Activated CD4-positive, alpha-beta T cell treated with anti-CD3 and anti-CD28 coated beads for 36 hours (primary cell): ENCODE measurements at regions of chr7 and their contacts with region 1.

Region 1: DNA sequence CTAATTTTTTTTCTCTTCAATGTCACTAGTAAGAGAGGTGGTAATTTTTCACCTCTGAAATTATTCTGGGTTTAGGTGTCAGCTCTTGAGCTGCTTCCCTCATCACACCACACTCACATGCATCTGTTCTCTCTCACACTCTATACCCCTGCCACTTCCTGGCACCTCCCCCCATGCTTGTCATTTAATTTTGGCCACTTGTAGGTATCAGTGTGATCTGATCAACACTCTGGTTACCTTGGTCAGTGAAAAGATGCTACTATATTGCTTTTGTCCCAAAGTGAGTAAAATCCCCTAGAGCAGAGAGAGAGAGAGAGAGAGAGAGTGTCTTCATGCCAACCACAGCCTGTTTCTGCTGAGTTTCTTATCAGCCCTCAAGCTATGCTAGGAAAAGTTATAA is 42.5 kb downstream of the STK17A start:
- DNase-seq: peak; percentile 60
- ATAC-seq: peak; percentile 62
- H3K4me3 Mint-ChIP-seq: peak overlapping the region; percentile 7
- H3K27ac Mint-ChIP-seq: peak overlapping the region; percentile 63
- H3K4me1 Mint-ChIP-seq: peaks cover 91% of the 10 kb centered on the region
- H3K27me3 Mint-ChIP-seq: no peaks in the 10 kb centered on the region

Region 2: DNA sequence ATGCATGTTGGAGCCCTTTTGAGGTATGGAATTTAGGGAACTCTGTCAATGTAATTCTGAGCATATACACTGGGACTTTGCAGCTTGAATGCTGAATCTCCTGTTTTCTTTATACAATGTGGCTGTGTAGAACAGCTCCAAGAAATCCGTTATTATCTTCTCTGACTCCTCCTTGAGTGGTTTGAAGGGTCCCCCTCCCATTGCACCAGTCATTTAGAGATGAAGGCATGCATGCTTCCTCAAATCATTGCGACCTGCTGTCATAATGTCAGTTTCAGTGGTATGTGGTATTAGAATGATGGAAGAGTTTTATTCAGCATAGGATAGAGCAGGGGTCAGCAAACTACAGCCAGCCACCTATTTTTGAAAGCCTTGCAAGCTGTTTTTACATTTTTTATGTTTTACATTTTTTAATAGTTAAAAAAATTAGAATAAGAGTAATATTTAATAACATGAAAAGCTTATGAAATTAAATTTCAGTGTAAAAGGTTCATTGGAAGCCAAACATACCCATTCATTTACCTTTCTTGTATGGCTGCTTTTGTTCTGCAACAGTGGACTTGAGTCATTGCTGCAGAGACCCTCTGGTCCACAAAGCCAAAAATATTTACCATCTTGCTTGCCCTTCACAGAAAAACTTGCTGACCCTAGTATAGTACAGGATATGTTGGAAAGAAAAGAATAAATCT is 34.4 kb before region 1 on chr7:
- CTCF ChIA-PET with region 1: no interaction called
- POLR2A ChIA-PET with region 1: interaction called, 6 read pairs
- intact Hi-C with region 1: loop called in 1 of 2 experiments (anchors 1 kb)
- DNase-seq: peak; percentile 70
- ATAC-seq: peak; percentile 63
- H3K4me3 Mint-ChIP-seq: peak overlapping the region; percentile 15
- H3K27ac Mint-ChIP-seq: peak overlapping the region; percentile 82
- H3K4me1 Mint-ChIP-seq: peaks cover 83% of the 10 kb centered on the region
- H3K27me3 Mint-ChIP-seq: no peaks in the 10 kb centered on the region

Region 3: DNA sequence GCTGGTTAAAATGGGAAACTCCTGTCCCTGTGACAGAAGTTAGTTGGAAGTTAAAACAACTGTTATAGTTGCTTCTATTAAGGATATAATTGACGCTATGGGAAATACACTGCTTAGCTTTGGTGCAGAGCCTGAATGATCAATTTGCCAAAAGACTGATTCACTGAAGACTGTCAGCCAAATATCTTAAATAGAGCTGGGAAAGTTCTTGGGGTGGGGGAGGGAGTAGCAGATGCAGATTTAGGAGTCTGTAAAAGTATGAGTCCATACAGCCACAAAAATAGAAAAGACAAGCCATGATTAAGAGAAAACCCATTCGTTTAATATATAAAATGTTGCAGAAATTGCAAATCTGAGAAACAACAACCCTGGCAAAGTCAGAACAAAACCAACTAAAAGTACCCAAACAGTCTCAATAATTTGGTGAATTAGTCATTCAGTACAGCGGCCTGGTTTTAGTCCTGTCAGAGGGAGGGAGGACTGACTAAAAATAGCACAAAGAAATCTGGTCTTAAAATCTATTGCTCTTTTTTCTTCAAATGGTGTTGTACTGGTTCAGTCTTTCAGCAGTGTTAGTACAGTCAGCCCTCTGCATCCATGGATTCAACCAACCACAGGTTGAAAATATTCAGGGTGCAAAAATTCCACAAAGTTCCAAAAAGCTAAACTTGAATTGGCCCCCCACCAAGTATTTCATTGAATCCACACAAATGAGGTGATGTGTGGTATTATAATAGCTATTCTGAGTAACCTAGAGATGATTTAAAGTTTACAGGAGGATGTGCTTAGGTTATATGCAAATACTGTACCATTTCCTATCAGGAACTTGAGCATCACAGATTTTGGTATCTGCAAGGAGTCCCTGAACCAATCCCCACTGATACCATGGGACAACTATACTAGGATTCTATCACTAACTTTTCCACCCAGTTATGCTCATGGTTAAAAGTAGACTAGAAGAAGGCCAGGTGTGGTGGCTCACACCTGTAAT is 12.6 kb before region 1 on chr7:
- CTCF ChIA-PET with region 1: interaction called, 4 read pairs
- POLR2A ChIA-PET with region 1: no interaction called
- intact Hi-C with region 1: loop called (anchors 1 kb)
- DNase-seq: peak; percentile 33
- ATAC-seq: peak; percentile 86
- H3K4me3 Mint-ChIP-seq: peak overlapping the region; percentile 10
- H3K27ac Mint-ChIP-seq: peak overlapping the region; percentile 87
- H3K4me1 Mint-ChIP-seq: peaks cover 73% of the 10 kb centered on the region
- H3K27me3 Mint-ChIP-seq: no peaks in the 10 kb centered on the region

Region 4: DNA sequence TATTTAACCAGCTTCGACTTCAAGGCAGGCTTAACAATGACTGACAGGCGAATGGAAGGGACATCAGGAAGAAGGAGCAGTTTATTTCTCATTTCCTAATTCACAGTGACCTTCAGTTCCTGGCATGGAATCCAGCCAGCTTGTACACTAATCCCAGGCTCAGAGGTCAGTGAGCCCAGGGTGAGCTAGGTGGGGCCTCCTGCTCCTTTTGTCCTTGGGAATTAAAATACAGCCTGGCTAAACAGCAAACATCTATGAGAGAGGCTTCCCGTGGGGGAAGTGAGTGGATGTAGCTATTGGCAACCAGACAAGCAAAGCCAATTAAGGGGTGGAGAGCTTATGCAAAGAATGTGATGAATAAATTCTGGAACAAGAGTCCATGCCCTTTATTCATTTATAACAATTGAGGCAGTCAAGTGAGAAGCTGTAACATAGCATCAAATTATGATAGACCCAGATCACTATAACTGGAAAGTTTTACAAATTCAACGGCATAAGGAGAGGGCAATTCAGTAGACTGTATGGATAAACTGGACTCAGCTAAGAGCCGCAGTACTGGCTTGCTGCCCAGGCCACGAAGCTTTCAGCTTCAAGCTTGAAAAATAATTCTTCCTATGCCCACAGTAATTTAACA is 14.5 kb after region 1 on chr7:
- CTCF ChIA-PET with region 1: interaction called, 9 read pairs
- POLR2A ChIA-PET with region 1: interaction called, 4 read pairs
- intact Hi-C with region 1: loop called in 1 of 2 experiments (anchors 2 kb)
- DNase-seq: no peak
- ATAC-seq: no peak
- H3K4me3 Mint-ChIP-seq: no peak overlapping the region
- H3K27ac Mint-ChIP-seq: peak overlapping the region; percentile 76
- H3K4me1 Mint-ChIP-seq: peaks cover 90% of the 10 kb centered on the region
- H3K27me3 Mint-ChIP-seq: no peaks in the 10 kb centered on the region

Region 5: DNA sequence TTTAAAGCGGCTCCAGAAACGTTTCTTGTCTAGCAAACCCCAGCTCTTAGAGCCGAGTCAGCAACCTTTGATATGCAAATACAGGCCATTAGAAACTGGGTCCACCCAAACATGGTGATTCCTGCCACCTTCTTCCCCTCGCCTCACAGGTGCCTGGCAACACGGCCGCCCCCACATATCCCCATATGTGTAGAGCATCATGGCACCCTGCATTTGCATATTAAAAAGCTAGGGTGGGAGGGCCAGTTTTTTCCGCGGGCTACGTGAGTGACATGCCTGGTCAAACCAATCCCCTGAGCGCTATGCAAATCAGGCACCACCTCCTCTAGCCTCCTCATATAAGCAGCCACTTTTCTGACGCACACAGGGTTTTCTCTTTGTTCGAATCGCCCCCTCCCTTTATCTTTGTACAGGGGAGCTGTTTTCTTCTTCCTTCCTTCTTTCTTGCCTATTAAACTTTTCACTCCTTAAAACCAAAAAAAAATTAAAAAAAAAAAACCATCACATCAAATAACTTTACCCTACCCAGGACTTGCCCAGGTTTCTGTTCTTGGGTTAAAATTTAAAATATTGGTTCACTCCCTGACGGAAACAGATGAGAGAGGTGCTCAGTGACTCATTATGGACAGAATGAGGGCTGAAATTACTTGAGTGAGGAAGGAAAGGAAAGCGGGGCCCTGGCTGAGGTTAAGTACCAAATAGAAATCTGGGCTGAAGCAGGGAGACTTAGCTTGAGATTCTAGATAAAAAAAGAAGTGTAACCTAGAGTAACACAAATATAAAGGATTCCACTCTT is 44.0 kb after region 1 on chr7:
- CTCF ChIA-PET with region 1: no interaction called
- POLR2A ChIA-PET with region 1: interaction called, 14 read pairs
- intact Hi-C with region 1: no loop called
- DNase-seq: peak; percentile 93
- ATAC-seq: peak; percentile 85
- H3K4me3 Mint-ChIP-seq: peak overlapping the region; percentile 68
- H3K27ac Mint-ChIP-seq: peak overlapping the region; percentile 94
- H3K4me1 Mint-ChIP-seq: peaks cover 84% of the 10 kb centered on the region
- H3K27me3 Mint-ChIP-seq: no peaks in the 10 kb centered on the region

Region 6: DNA sequence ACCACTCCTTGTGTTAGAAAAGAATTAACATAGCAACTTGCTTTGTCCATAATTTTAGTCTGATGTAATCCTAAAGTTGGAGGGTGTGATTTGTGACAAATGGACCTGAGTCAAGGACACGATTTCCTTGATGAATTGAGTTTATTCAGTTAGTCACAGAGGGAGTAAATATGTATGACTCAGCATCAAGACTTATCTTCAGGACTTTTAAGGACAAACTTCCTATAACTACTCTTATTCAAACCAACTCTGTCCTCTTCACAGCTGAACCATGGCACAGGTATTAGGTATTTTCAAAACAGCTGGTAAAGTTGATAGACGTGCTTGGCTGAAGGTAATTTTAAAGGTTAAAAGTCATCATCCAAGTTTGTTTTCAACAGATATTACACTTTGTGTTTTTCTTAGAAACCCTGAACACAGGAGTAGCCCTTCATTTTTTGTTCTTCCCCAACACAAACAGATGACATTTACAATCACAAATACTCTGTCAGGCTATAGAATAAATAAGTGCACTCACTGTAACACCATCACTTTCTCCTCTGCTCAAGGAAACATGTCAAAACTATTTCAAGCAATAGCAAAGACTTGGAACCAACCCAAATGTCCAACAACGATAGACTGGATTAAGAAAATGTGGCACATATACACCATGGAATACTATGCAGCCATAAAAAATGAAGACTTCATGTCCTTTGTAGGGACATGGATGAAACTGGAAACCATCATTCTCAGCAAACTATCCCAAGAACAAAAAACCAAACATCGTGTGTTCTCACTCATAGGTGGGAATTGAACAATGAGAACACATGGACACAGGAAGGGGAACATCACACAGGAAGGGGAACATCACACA is 49.4 kb after region 1 on chr7:
- CTCF ChIA-PET with region 1: interaction called, 5 read pairs
- POLR2A ChIA-PET with region 1: interaction called, 14 read pairs
- intact Hi-C with region 1: loop called in 1 of 2 experiments (anchors 2 kb)
- DNase-seq: no peak
- ATAC-seq: no peak
- H3K4me3 Mint-ChIP-seq: no peak overlapping the region
- H3K27ac Mint-ChIP-seq: peak overlapping the region; percentile 65
- H3K4me1 Mint-ChIP-seq: peaks cover 80% of the 10 kb centered on the region
- H3K27me3 Mint-ChIP-seq: no peaks in the 10 kb centered on the region